CD4-positive, alpha-beta memory T cell (primary cell): ENCODE measurements at regions of chr19 and their contacts with region 1.

Region 1: DNA sequence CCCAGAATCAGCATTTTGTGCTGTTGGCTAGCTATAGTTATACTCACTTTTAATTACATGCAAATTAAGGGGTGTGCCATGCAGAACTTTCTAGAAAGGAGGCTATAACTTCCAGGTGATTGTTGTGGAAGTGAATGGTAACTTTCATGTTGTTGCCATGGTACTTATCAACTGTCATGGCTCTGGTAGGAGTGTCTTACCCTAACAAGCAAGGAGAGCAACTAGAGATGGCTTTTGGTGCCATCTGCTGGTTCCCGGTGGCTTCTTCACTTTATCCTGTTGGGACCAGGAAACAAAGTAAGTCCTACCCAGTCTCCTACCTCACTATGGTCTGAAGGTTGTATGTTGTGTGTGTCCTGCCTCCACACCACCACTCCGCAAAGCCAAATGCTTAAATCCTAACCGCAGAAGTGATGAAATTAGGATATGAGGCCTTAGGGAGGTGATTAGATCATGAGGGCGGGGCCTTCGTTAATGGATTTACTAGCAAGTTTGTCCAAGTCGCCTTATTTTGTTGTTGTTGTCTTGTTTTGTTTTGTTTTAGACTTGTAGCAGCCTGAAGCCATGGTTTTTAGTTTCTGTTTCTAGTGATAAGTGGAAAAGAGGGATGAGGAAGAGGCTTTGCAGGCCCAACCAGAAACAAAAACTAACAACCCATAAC is 22.6 kb downstream of the FBXL12 start:
- DNase-seq: peak; percentile 84 to 93 (median 90)
- H3K4me3 ChIP-seq: no peak overlapping the region
- H3K4me3 Mint-ChIP-seq: peak overlapping the region in 2 of 8 donors; percentile 11 to 55
- H3K27ac ChIP-seq: peak overlapping the region; percentile 48
- H3K27ac Mint-ChIP-seq: peak overlapping the region; percentile 89 to 97 (median 94)
- H3K4me1 ChIP-seq: peaks cover 20% of the 10 kb centered on the region
- H3K4me1 Mint-ChIP-seq: peaks cover 19 to 35% (median 28%) of the 10 kb centered on the region in 4 donors
- H3K27me3 ChIP-seq: no peaks in the 10 kb centered on the region
- H3K27me3 Mint-ChIP-seq: no peaks in the 10 kb centered on the region

Region 2: GRCh38 chr19:9309139-9309973 is 486.9 kb before region 1 on chr19 and contains the start of gene ZNF699:
- CTCF ChIA-PET with region 1: no interaction called
- POLR2A ChIA-PET with region 1: no interaction called
- intact Hi-C with region 1: loop called (anchors 2 kb)
- DNase-seq: peak; percentile 97 to 100 (median 97)
- H3K4me3 ChIP-seq: peak within 1 kb of the TSS; percentile 92 to 93
- H3K4me3 Mint-ChIP-seq: peak within 1 kb of the TSS; percentile 89 to 99 (median 94)
- H3K27ac ChIP-seq: peak within 1 kb of the TSS; percentile 96
- H3K27ac Mint-ChIP-seq: peak within 1 kb of the TSS; percentile 88 to 99 (median 97)
- H3K4me1 ChIP-seq: peaks cover 23% of the 10 kb centered on the region
- H3K4me1 Mint-ChIP-seq: peaks cover 21 to 47% (median 34%) of the 10 kb centered on the region in 4 donors
- H3K27me3 ChIP-seq: no peaks in the 10 kb centered on the region
- H3K27me3 Mint-ChIP-seq: no peaks in the 10 kb centered on the region
- total RNA-seq, gene ZNF699: 20.9 to 22.1 TPM

Region 3: GRCh38 chr19:9584073-9584833 is 212.0 kb before region 1 on chr19 and contains the start of gene ZNF121:
- CTCF ChIA-PET with region 1: interaction called, 8 read pairs
- POLR2A ChIA-PET with region 1: no interaction called
- intact Hi-C with region 1: loop called (anchors 1 kb)
- DNase-seq: peak; percentile 67 to 76 (median 73)
- H3K4me3 ChIP-seq: peak within 1 kb of the TSS; percentile 99 to 100
- H3K4me3 Mint-ChIP-seq: peak within 1 kb of the TSS; percentile 94 to 99 (median 97)
- H3K27ac ChIP-seq: peak within 1 kb of the TSS; percentile 97
- H3K27ac Mint-ChIP-seq: peak within 1 kb of the TSS; percentile 96 to 99 (median 98)
- H3K4me1 ChIP-seq: peaks cover 26% of the 10 kb centered on the region
- H3K4me1 Mint-ChIP-seq: peaks cover 21 to 55% (median 34%) of the 10 kb centered on the region in 4 donors
- H3K27me3 ChIP-seq: no peaks in the 10 kb centered on the region
- H3K27me3 Mint-ChIP-seq: peaks cover 2 to 4% of the 10 kb centered on the region in 2 donors
- total RNA-seq, gene ZNF121: 47.2 to 53.0 TPM

Region 4: DNA sequence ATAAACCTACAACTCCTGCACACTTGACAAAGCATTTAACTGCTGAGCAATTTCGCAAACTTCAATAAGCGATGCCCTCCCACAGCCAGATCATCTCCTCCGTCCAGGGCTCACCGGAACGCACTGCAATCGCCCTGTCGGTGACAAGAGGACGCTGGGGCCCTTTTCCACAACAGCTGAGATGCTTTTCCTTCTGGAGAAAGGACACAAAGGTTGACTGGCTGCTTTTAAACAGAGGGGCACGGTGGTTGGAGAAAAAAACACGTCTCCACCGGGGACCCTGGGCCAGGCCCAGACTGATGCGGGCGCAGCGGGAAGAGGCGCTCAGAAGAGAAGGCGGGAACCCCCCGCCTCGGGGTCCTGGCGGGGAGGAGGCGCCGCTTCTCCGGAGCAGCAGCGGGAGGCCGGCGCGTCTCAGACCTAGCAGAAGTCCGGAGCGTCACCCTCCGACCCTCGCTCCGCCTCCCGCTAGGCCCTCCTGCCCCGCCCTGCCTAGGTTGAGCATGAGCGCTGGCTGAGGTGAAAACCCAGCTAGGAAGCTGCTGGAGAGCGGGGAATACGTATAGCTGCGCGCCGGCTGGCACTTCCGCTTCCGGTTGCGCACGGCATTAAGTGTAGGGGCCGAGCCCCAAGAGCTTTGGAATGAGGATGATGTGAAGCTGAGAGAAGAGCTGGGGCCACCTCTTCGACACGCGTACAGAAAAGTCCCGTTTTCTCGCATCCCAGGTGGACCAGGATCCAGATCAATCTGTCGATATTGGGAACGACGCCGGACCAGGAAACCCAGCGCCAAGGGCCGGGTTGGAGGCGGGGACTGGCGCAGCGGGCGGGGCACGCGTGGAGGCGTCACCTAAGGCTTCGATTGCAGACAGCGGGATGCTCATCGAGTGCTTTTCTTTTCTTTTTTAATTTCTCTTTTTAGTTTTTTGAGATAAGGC is 27.8 kb before region 1 on chr19 and contains the start of gene ZNF846:
- CTCF ChIA-PET with region 1: interaction called, 4 read pairs
- POLR2A ChIA-PET with region 1: interaction called, 13 read pairs
- intact Hi-C with region 1: loop called (anchors 1 kb)
- DNase-seq: peak; percentile 91 to 94 (median 92)
- H3K4me3 ChIP-seq: peak within 1 kb of the TSS; percentile 98 to 100
- H3K4me3 Mint-ChIP-seq: peak within 1 kb of the TSS; percentile 94 to 99 (median 96)
- H3K27ac ChIP-seq: peak within 1 kb of the TSS; percentile 94
- H3K27ac Mint-ChIP-seq: peak within 1 kb of the TSS; percentile 98 to 100 (median 99)
- H3K4me1 ChIP-seq: peaks cover 15% of the 10 kb centered on the region
- H3K4me1 Mint-ChIP-seq: peaks cover 6 to 12% (median 9%) of the 10 kb centered on the region in 4 donors
- H3K27me3 ChIP-seq: no peaks in the 10 kb centered on the region
- H3K27me3 Mint-ChIP-seq: no peaks in the 10 kb centered on the region
- total RNA-seq, gene ZNF846: 16.9 to 19.7 TPM

Region 5: DNA sequence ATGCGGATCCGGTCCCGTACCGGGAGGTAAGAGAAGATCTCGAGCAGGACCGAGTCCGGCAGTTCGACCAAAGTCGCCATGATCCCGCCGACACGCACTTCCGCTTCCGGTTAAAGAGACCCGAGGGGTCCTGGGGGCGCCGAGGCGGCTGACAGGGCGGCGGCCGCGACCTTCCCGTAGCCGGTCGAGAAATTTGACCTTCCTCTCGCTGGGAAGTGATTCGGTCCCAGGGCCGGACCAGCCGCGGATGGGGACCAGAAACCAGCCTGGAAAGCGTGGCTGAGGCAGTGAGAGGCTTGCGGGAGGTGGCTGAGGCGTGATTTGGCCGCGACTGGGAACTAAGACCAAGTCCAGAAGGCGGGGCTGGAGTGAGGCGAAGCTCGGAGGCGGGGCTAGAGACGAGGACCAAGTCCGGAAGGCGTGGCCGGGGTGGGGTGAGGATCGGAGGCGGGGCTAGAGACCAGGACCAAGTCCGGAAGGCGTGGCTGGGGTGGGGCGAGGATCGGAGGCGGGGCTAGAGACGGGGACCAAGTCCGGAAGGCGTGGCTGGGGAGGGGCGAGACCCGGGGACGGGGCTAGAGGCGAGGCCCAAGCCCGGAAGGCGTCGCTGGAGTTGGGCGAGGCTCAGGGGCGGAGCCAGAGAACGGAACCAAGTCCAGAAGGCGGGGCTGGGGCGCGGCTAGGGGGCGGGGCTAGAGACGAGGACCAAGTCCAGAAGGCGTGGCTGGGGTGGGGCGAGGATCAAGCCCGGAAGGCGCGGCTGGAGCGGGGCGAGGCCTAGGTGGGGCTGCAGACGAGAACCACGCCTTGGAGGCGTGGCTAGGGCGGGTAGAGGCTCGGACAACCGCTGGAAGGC is 22.7 kb after region 1 on chr19 and contains the start of gene FBXL12:
- CTCF ChIA-PET with region 1: no interaction called
- POLR2A ChIA-PET with region 1: interaction called, 8 read pairs
- intact Hi-C with region 1: loop called (anchors 1 kb)
- DNase-seq: peak; percentile 100
- H3K4me3 ChIP-seq: peak within 1 kb of the TSS; percentile 95
- H3K4me3 Mint-ChIP-seq: peak within 1 kb of the TSS; percentile 89 to 95 (median 91)
- H3K27ac ChIP-seq: peak within 1 kb of the TSS; percentile 92
- H3K27ac Mint-ChIP-seq: peak within 1 kb of the TSS; percentile 86 to 97 (median 96)
- H3K4me1 ChIP-seq: peaks cover 19% of the 10 kb centered on the region
- H3K4me1 Mint-ChIP-seq: peaks cover 21 to 40% (median 34%) of the 10 kb centered on the region in 4 donors
- H3K27me3 ChIP-seq: no peaks in the 10 kb centered on the region
- H3K27me3 Mint-ChIP-seq: no peaks in the 10 kb centered on the region
- total RNA-seq, gene FBXL12: 27.8 to 30.7 TPM

Region 6: DNA sequence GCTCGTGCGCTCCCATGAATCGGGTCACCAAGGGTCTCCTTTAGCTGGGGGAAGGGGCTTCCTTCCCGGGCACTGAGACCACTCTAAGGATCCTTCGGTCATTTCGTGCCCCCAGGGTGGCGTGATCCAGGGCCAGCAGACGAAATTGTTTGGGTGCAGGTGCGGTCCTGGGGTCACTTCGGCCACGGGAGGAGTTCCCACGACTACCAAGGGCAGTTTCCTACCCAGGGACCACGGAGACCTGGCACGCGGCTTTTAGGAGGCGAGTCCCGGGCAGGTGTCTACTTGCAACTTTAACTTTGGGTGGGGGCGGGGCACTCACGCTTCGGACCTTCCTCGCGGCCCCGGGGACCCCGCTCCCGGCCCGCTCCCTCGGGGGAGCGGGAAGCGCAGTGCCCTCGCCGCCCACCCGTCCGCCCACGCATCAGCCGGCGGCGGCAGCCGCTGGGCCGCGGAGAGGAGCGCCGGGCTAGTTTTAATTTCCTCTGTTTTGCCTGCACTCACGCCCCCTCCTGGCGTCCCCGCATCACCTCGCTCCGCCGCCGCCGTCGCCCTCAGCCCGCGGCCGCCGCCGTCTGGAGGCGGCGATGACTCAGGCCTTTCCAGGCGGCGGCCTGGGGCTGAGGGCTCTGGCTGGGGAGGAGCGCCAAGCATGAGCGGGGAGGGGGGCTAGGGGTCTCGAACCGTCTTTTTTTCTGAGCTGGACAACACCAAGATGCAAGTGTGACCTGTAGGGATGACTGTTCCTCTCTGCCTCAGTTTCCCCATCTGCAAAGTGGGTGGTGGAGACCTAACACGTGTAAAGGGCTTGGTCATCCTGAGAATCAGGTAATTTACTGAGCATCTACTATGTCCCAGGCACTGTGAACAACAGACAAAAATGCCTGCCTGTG is 118.3 kb after region 1 on chr19:
- CTCF ChIA-PET with region 1: no interaction called
- POLR2A ChIA-PET with region 1: no interaction called
- intact Hi-C with region 1: loop called (anchors 1 kb)
- DNase-seq: peak; percentile 74 to 81 (median 77)
- H3K4me3 ChIP-seq: peak overlapping the region; percentile 14 to 64
- H3K4me3 Mint-ChIP-seq: peak overlapping the region; percentile 61 to 81 (median 78)
- H3K27ac ChIP-seq: no peak overlapping the region
- H3K27ac Mint-ChIP-seq: peak overlapping the region in 1 of 7 donors; percentile 30
- H3K4me1 ChIP-seq: peaks cover 15% of the 10 kb centered on the region
- H3K4me1 Mint-ChIP-seq: peaks cover 4 to 18% (median 7%) of the 10 kb centered on the region in 4 donors
- H3K27me3 ChIP-seq: peaks cover 20% of the 10 kb centered on the region
- H3K27me3 Mint-ChIP-seq: peaks cover 18 to 27% of the 10 kb centered on the region in 2 donors

Region 7: GRCh38 chr19:10000171-10000826 is 204.1 kb after region 1 on chr19:
- CTCF ChIA-PET with region 1: no interaction called
- POLR2A ChIA-PET with region 1: no interaction called
- intact Hi-C with region 1: no loop called
- DNase-seq: peak; percentile 54 to 64 (median 61)
- H3K4me3 ChIP-seq: no peak overlapping the region
- H3K4me3 Mint-ChIP-seq: peak overlapping the region in 1 of 8 donors; percentile 54
- H3K27ac ChIP-seq: no peak overlapping the region
- H3K27ac Mint-ChIP-seq: peak overlapping the region in 2 of 7 donors; percentile 31 to 38
- H3K4me1 ChIP-seq: peaks cover 25% of the 10 kb centered on the region
- H3K4me1 Mint-ChIP-seq: peaks cover 6 to 31% (median 19%) of the 10 kb centered on the region in 4 donors
- H3K27me3 ChIP-seq: no peaks in the 10 kb centered on the region
- H3K27me3 Mint-ChIP-seq: peaks cover 26 to 33% of the 10 kb centered on the region in 2 donors

Region 8: GRCh38 chr19:10120538-10121189 is 324.4 kb after region 1 on chr19:
- CTCF ChIA-PET with region 1: no interaction called
- POLR2A ChIA-PET with region 1: no interaction called
- intact Hi-C with region 1: no loop called
- DNase-seq: no peak
- H3K4me3 ChIP-seq: no peak overlapping the region
- H3K4me3 Mint-ChIP-seq: peak overlapping the region in 3 of 8 donors; percentile 9 to 55 (median 27)
- H3K27ac ChIP-seq: no peak overlapping the region
- H3K27ac Mint-ChIP-seq: no peak overlapping the region
- H3K4me1 ChIP-seq: peaks cover 25% of the 10 kb centered on the region
- H3K4me1 Mint-ChIP-seq: peaks cover 3 to 35% (median 10%) of the 10 kb centered on the region in 4 donors
- H3K27me3 ChIP-seq: no peaks in the 10 kb centered on the region
- H3K27me3 Mint-ChIP-seq: no peaks in the 10 kb centered on the region